GM12878 (cell line): ENCODE measurements at regions of chr14 and their contacts with region 1.

Region 1: DNA sequence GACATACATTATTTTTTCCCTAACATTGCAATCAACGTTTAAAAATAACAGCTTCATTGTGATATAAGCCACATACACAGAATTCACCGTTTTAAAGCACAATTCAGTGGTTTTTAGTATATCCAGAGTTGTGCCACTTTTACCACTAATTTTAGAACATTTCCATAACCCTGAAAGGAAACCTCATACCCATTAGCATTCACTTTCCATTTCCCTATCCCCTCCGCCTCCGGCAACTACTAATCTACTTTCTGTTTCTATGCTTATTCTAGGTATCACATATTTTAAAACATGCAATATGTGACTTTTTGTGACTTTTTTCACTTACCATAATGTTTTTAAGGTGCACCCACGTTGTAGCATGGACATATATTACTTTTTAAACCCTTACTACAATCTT is 55.6 kb upstream of the ISM2 start:
- DNase-seq: peak; percentile 37
- ATAC-seq: peak; percentile 83
- H3K4me3 ChIP-seq: no peak overlapping the region
- H3K27ac ChIP-seq: peak overlapping the region; percentile 87
- H3K4me1 ChIP-seq: peaks cover 16% of the 10 kb centered on the region
- H3K27me3 ChIP-seq: no peaks in the 10 kb centered on the region
- CTCF ChIP-seq: no peak
- EP300 ChIP-seq: no peak
- POLR2A ChIP-seq: no peak
- RAD21 ChIP-seq: no peak

Region 2: DNA sequence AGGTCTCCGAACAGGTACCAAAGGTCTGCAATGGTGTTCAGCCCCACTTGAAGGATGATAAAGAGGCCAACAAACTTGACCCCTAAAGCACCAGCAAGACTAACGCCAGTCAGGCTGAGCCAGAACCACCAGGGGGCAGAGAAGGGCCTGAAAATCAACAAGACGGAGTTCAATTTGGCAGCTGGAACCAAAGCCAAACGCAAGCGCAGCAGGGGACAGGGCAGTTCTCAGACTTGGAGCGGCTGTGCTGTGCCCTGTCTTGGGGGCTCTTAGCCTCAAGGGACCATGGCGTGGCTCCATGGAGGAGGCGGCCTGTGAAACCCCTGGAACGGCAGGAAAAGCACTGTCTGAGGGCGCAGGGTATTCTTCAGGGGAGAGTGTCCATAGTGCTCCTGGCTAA is 253.1 kb before region 1 on chr14:
- CTCF ChIA-PET with region 1: interaction called, 13 read pairs
- POLR2A ChIA-PET with region 1: no interaction called
- RAD21 ChIA-PET with region 1: interaction called, 3 read pairs
- SMC1A ChIA-PET with region 1: interaction called, 5 read pairs
- in situ Hi-C with region 1: no loop called
- intact Hi-C with region 1: loop called (anchors 1 kb)
- DNase-seq: no peak
- ATAC-seq: peak; percentile 92
- H3K4me3 ChIP-seq: no peak overlapping the region
- H3K27ac ChIP-seq: no peak overlapping the region
- H3K4me1 ChIP-seq: no peaks in the 10 kb centered on the region
- H3K27me3 ChIP-seq: no peaks in the 10 kb centered on the region
- CTCF ChIP-seq: peak; percentile 73 to 81 (median 74)
- EP300 ChIP-seq: no peak
- POLR2A ChIP-seq: no peak
- RAD21 ChIP-seq: peak; percentile 83

Region 3: DNA sequence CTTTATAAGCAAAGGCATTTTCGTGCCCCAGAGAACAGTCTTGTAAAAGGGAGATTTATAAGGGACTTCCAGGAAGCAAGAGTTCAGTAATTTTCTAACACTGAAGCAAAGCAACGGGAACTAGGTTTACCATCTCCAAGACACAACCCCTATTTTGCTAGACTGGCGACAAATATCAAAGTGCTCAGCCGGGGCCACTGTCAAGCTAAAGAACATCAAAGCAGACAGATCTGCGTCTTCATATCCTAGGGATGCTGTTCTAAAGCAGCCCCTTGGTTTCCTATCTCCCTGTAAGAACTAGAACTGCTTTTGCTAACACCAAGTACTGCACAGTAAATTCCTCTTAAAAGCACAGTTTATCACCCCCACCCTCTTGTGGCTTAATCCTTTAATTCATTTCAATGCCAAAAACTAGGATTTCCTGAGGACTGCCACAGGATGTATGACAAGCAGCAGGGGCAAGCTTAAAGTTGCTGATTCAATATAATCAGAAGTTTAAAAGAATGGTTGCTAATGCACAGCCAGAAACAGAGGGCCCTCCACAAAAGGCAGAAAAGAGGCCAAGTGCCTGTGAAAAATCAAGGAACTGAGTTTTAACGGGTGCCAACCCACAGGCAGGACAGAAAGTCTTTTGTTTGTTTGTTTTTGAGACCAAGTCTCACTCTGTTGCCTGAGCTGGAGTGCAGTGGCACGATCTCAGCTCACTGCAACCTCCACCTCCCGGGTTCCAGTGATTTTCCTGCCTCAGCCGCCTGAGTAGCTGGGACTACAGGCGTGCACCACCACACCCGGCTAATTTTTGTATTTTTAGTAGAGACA is 11.6 kb before region 1 on chr14:
- CTCF ChIA-PET with region 1: interaction called, 29 read pairs
- POLR2A ChIA-PET with region 1: interaction called, 3 read pairs
- RAD21 ChIA-PET with region 1: interaction called, 5 read pairs
- SMC1A ChIA-PET with region 1: interaction called, 11 read pairs
- in situ Hi-C with region 1: no loop called
- intact Hi-C with region 1: no loop called
- DNase-seq: no peak
- ATAC-seq: peak; percentile 66
- H3K4me3 ChIP-seq: peak overlapping the region; percentile 10; the same call in 1 of the 2 replicates
- H3K27ac ChIP-seq: peak overlapping the region; percentile 73
- H3K4me1 ChIP-seq: peaks cover 19% of the 10 kb centered on the region
- H3K27me3 ChIP-seq: no peaks in the 10 kb centered on the region
- CTCF ChIP-seq: no peak
- EP300 ChIP-seq: no peak
- POLR2A ChIP-seq: no peak
- RAD21 ChIP-seq: no peak

Region 4: GRCh38 chr14:77565289-77565993 is 11.2 kb after region 1 on chr14:
- CTCF ChIA-PET with region 1: interaction called, 6 read pairs
- POLR2A ChIA-PET with region 1: no interaction called
- RAD21 ChIA-PET with region 1: no interaction called
- SMC1A ChIA-PET with region 1: interaction called, 10 read pairs
- in situ Hi-C with region 1: no loop called
- intact Hi-C with region 1: no loop called
- DNase-seq: no peak
- ATAC-seq: no peak
- H3K4me3 ChIP-seq: no peak overlapping the region
- H3K27ac ChIP-seq: no peak overlapping the region
- H3K4me1 ChIP-seq: no peaks in the 10 kb centered on the region
- H3K27me3 ChIP-seq: no peaks in the 10 kb centered on the region
- CTCF ChIP-seq: no peak
- EP300 ChIP-seq: no peak
- POLR2A ChIP-seq: no peak
- RAD21 ChIP-seq: no peak

Region 5: DNA sequence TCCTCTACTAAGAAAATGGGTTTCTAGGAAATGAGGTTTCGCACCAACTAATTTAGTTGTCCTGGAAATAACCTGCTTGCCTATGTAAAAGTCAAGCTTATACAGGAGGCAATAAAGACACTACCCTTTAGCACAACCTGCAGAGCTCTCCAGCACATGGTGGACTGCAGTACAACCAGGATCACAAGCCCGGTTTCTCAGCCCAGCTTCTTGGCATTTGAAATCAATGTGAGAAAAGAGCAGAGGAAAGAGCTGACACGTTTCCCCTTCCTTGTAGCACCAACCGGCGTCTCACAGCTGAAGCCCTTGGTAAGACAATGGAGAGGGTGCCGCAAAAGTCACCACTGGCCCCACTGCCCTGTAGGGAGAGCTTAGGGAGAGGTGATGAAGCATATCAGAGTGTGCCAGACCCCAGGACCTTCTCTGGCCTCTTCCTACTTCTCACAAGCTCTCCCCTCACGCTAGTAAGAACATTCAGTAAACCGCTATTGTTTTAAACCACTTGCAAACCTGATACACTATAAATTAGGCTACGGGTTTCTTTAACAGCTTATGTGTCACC is 53.6 kb after region 1 on chr14:
- CTCF ChIA-PET with region 1: interaction called, 8 read pairs
- POLR2A ChIA-PET with region 1: interaction called, 3 read pairs
- RAD21 ChIA-PET with region 1: interaction called, 12 read pairs
- SMC1A ChIA-PET with region 1: interaction called, 10 read pairs
- in situ Hi-C with region 1: no loop called
- intact Hi-C with region 1: no loop called
- DNase-seq: no peak
- ATAC-seq: peak; percentile 77
- H3K4me3 ChIP-seq: 0 out of 2 replicates have a peak overlapping the region, but pooled peaks have one; percentile 31
- H3K27ac ChIP-seq: peak overlapping the region; percentile 68
- H3K4me1 ChIP-seq: peaks cover 18% of the 10 kb centered on the region
- H3K27me3 ChIP-seq: no peaks in the 10 kb centered on the region
- CTCF ChIP-seq: no peak
- EP300 ChIP-seq: no peak
- POLR2A ChIP-seq: no peak
- RAD21 ChIP-seq: no peak

Region 6: DNA sequence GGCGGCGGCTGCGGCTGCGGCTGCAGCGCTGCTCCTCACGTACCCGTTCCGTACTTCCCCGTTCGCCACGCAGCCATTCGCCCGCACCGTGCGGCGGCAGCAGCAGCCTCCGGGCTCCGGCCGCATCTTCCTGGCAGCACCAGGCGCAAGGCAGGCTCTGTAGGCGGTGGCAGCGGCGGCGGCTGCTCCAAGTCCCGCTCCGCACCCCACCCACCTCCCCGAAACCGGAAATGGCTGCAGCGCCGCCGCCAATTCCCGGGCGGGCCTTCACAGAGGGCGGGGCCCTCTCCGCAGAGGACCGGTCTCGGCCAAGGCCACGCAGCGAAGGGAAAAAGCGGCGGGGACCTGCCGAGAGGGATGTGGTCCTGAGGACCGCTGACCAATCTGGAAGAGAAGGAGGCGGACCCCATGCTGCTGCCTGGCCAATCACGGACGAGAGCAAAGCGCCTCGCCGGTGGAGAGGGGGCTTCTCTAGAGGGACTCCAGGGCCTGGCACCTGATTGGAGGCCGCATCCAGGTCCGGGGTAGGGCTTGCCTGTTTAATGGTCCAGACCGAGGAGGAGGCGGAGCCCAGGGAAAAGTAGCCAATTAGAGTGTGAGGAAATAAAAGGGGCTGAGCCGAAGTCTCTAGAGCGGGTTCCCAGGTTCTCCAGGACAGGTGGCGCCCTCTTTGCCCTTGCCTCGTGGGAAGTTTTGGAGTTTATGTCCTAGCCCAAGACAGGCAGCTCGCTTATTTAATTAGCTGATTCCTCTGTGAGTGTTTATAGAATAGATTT is 62.4 kb after region 1 on chr14 and contains the start of gene SPTLC2:
- CTCF ChIA-PET with region 1: interaction called, 10 read pairs
- POLR2A ChIA-PET with region 1: interaction called, 3 read pairs
- RAD21 ChIA-PET with region 1: interaction called, 7 read pairs
- SMC1A ChIA-PET with region 1: interaction called, 10 read pairs
- in situ Hi-C with region 1: no loop called
- intact Hi-C with region 1: no loop called
- DNase-seq: peak; percentile 97
- ATAC-seq: peak; percentile 98
- H3K4me3 ChIP-seq: peak within 1 kb of the TSS; percentile 92
- H3K27ac ChIP-seq: peak within 1 kb of the TSS; percentile 73
- H3K4me1 ChIP-seq: no peaks in the 10 kb centered on the region
- H3K27me3 ChIP-seq: no peaks in the 10 kb centered on the region
- CTCF ChIP-seq: peak in 2 of 3 experiments; percentile 19 to 27; a peak in 1 of 6 replicates
- EP300 ChIP-seq: no peak
- POLR2A ChIP-seq: peak; percentile 88
- RAD21 ChIP-seq: no peak
- polyA plus RNA-seq, gene SPTLC2: 6.9 to 7.3 TPM